ENCODE measurements at regions of chr6 and their contacts with region 1.

Region 1: DNA sequence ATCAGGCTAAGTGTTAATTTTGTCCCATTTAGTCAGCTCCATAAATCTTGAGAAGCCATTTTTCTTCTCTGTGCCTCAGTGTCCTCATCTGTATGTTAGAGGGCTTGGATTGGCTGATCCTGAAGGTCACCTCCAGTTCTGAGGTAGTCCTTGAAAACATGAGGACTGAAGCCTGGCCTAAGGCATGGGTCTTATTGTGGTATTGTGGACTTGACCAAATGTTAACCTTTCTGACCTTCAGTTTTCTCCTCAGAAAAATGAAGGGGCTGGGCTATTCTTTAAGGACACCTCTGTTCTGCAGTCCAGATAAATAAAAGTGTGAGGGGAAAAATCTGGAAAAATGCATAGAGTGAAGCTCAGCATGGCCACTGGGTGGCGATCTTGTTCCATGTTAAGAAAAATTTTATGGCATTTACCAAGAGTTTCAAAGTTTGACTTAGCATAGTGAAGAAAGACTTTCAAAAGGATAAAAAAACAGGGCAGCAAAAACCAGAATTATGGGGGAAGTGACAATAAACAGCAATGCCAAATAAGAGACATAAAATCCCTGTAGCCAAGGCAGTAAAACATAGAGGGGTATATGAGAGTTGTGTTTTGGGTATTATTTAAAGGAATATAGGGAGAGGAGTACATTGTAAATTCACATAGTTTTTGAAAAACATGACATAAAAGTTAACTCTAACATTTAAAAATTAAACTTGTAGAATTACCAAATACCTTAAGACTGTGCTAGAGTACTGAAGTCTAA is 13.2 kb upstream of the TFB1M start:
- DNase-seq: peak; percentile 86
- ATAC-seq: no peak
- H3K4me3 ChIP-seq: peak overlapping the region; percentile 77 to 88 (median 82)
- H3K27ac ChIP-seq: peak overlapping the region; percentile 100
- H3K4me1 ChIP-seq: peaks cover 68% of the 10 kb centered on the region
- H3K27me3 ChIP-seq: no peaks in the 10 kb centered on the region; a peak in 1 of 5 replicates
- CTCF ChIP-seq: peak; percentile 81
- EP300 ChIP-seq: peak in 1 of 2 experiments; percentile 60; a peak in 1 of 4 replicates
- POLR2A ChIP-seq: peak; percentile 58 to 71; a peak in 2 of 4 replicates
- RAD21 ChIP-seq: peak; percentile 88

Region 2: DNA sequence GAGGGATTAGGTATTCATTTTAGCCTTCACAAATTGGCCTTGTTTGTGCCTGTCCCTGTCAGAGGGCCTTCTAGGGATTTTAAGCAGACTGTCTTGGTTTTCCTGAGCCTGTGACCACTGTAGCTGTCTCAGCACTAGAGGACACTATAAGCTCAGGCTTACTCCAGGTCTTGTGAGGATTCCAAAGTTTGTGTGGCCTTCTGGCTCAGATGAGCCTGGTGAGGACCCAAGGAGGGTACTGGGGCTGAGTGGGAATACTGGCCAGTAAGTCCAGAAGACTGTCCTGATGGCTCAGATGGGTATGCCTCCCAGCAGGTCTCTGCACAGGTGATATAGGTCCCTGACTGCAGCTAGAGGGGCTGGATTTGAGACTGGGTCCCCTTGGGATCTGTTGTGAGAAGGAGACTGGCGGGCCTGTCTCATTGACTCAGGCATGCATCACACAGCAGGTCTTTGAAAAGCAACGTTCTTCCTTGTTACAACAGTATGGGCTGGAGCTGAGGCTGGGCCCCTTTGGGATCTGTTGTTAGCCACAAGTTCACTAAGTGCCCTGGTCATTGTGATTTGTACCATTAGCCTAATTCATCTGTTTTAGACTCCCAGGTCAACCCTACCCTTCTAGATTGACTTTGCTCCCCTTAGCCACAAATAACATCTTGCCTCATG is 13.1 kb after region 1 on chr6:
- CTCF ChIA-PET with region 1: interaction called, 3 read pairs
- POLR2A ChIA-PET with region 1: interaction called, 26 read pairs
- in situ Hi-C with region 1: no loop called
- intact Hi-C with region 1: no loop called
- DNase-seq: peak; percentile 76
- ATAC-seq: peak; percentile 94
- H3K4me3 ChIP-seq: no peak overlapping the region
- H3K27ac ChIP-seq: peak overlapping the region; percentile 14
- H3K4me1 ChIP-seq: peaks cover 24% of the 10 kb centered on the region
- H3K27me3 ChIP-seq: no peaks in the 10 kb centered on the region
- CTCF ChIP-seq: peak; percentile 84
- EP300 ChIP-seq: 0 out of 4 replicates have a peak, but pooled peaks of 1 of the 2 experiments have one; percentile 26
- POLR2A ChIP-seq: no peak
- RAD21 ChIP-seq: peak; percentile 79

Region 3: DNA sequence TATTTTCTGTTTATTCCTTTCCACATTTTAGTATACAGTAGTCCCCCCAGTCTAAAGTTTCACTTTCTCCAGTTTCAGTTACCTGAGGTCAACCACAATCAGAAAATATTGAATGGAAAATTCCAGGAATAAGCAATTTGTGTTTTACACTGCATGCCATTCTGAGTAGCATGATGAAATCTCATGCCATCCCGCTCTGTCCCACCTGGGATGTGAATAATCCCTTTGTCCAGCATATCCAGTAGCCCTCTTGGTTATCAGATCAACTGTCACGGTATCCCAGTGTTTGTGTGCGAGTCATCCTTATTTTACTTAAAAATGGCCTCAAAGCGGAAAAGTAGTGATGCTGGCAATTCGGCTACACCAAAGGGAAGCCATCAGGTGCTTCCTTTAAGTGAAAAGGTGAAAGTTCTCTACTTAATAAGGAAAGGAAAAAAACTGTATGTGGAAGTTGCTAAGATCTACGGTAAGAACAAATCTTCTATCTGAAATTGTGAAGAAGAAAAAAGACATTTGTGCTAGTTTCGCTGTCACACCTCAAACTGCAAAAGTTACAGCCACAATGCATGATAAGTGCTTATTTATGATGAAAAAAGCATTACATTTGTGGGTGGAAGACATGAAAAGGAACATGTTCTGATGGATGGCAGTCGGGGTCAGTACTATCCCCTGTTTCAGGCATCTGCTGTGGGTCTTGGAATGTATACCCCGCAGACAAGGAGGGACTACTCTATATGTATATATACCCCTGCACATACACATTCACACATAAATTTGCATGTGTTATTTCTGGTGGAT is 116.8 kb after region 1 on chr6:
- CTCF ChIA-PET with region 1: no interaction called
- POLR2A ChIA-PET with region 1: interaction called, 14 read pairs
- in situ Hi-C with region 1: loop called (anchors 5 kb)
- intact Hi-C with region 1: loop called (anchors 1 kb)
- DNase-seq: peak; percentile 100
- ATAC-seq: peak; percentile 100
- H3K4me3 ChIP-seq: peak overlapping the region in 1 of 3 experiments; percentile 28; a peak in 1 of 6 replicates
- H3K27ac ChIP-seq: peak overlapping the region; percentile 96
- H3K4me1 ChIP-seq: peaks cover 78% of the 10 kb centered on the region
- H3K27me3 ChIP-seq: no peaks in the 10 kb centered on the region
- CTCF ChIP-seq: no peak
- EP300 ChIP-seq: peak; percentile 99
- POLR2A ChIP-seq: peak in 1 of 2 experiments; percentile 59; a peak in 2 of 4 replicates
- RAD21 ChIP-seq: peak; percentile 37

Region 4: DNA sequence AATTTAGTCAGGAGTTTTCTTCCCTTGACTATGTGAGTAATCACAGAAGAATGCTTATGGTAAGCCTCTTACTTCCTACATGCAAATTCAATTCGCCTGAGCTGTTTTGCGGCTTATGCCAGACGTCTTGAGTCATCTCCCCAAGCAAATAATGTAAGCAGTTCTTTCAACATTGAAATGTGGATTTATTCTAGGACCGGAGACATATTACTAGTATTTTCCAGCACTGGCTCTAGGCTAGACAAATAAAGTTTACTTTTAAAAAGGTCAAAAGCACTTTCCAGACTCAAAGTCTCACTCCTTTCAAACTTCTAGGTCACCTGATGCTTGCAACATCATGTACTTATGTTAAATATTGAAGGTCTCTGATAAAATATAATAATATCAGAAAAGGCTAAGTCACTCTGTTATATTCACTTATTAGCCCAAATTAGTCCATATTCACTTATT is 166.2 kb after region 1 on chr6:
- CTCF ChIA-PET with region 1: interaction called, 12 read pairs
- POLR2A ChIA-PET with region 1: interaction called, 107 read pairs
- in situ Hi-C with region 1: loop called (anchors 5 kb)
- intact Hi-C with region 1: loop called (anchors 1 kb)
- DNase-seq: peak; percentile 91
- ATAC-seq: peak; percentile 20; the same call in 2 of the 3 replicates
- H3K4me3 ChIP-seq: no peak overlapping the region
- H3K27ac ChIP-seq: peak overlapping the region; percentile 76
- H3K4me1 ChIP-seq: peaks cover 92% of the 10 kb centered on the region
- H3K27me3 ChIP-seq: no peaks in the 10 kb centered on the region
- CTCF ChIP-seq: no peak
- EP300 ChIP-seq: peak in 1 of 2 experiments; percentile 92; a peak in 2 of 4 replicates
- POLR2A ChIP-seq: no peak
- RAD21 ChIP-seq: no peak

Region 5: DNA sequence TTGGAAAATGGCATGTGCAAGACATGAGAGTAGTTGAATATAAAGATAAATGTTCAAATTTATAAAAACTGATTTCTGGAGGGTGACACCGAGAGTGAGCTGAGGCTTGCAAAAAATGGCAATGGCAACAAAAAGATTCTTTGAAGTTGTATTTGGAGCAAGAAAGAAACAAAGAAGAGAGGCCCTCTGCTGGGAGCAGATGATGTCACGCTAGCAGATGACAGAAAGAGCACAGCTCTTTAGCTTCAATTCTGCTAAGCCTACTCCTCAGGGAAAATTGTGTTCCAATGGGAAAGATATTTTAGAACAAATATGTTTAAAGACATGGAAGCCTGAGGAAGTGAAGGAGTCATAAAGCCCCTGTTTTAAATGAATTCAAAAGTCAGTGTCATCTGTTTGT is 253.4 kb after region 1 on chr6:
- CTCF ChIA-PET with region 1: no interaction called
- POLR2A ChIA-PET with region 1: interaction called, 3 read pairs
- in situ Hi-C with region 1: no loop called
- intact Hi-C with region 1: loop called (anchors 1 kb)
- DNase-seq: no peak
- ATAC-seq: peak; percentile 77
- H3K4me3 ChIP-seq: no peak overlapping the region
- H3K27ac ChIP-seq: no peak overlapping the region
- H3K4me1 ChIP-seq: no peaks in the 10 kb centered on the region
- H3K27me3 ChIP-seq: no peaks in the 10 kb centered on the region; a peak in 1 of 5 replicates
- CTCF ChIP-seq: peak; percentile 41; the same call in 1 of the 2 replicates
- EP300 ChIP-seq: no peak
- POLR2A ChIP-seq: no peak
- RAD21 ChIP-seq: no peak